ENCODE measurements at regions of chr6 and their contacts with region 1.

Region 1: DNA sequence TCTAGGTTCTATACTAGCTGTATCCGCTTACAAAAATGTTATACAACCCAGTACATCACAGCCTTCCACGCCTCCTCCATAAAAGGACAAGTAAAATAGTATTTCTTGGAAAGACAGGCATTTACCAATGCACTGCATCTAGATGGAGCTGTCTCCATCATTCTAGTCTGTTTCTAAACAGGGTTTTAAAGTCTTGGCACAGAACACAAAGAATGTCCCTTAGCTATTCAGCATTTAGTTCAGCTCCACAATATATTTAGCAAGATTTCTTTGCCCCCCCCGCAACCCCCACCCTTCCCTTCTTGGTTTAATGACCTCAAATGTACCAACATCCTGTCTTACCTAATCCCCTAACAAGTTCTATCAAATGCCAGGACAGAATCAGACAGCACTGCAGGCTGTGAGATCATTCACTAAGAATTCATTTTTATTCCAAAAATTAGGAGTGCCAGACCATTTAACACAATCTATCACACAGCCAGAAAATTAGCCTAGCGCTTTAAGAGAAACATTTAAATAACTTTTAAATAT is 198.6 kb downstream of the BACH2 start:
- DNase-seq: no peak

Region 2: GRCh38 chr6:89970609-89971337 is 127.3 kb before region 1 on chr6:
- intact Hi-C with region 1: loop called (anchors 5 kb)
- DNase-seq: no peak

Region 3: DNA sequence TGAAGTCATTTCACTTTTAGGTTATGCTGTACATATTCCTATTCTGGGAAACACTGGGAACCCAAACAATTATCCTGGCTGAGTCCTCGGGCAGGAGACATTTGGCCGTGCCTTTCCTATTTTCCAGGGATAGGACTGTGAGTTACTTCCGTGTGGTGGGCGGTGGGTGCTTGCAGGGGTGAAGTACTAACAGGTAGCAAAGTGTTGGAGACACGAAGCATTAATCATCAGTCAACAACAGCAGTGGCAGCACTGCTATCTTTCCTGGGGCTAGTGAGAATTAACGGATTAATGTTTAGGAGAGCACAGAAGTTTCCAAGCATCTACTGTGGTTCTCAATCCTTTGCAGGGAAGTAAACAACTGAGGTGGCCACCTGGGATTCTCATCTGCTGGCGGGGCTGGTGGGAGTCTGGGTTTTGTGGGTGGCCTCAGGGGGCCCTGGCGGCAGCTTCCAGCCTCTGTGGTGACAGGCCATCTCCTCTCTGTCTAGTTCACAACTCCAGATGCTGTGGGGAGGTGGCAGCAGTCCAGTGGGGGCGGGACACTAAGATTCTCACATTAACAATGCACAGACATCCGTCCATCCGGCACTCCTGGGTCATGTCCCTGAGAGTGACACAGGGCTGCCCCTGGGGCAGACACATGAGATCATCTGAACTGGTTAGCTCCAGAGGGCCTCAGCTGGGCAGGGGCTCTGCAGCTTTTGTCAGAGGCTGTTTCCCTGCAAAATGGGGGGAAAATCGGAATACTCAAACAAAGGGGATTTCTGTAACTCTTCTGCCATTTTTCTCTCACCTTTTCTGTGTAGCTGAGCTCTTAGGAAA is 112.9 kb before region 1 on chr6:
- intact Hi-C with region 1: loop called (anchors 5 kb)
- DNase-seq: peak; percentile 92

Region 4: DNA sequence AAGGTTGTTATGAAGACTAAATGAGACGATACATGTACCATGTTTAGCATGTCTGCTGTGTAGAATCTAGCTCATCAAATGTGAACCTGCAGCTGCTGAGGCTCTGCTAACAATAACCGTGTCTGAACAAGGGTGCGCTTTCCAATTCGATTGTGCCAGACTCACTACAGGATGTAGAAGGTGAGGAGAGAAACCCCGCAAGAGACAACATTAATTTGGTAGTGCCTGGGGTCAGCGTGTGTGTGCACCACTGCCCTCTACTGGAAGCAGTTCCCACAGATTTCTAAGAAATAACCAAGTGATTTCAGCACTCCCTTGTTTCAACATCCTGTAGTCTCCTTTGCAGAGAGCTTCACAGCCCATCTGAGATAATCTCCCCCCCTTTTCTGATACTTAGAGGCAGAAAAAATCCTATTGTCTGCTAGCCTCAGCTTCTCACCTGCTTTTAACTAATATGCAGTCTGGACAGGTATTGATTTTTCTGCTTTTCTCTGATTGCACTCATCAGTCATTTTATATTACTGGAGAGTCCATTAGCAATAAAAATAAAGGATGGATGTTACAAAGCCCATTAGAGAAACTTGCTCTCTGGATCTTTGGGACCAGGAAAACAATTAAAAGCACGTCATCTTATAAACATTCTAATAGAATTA is 295.3 kb after region 1 on chr6:
- intact Hi-C with region 1: loop called (anchors 5 kb)
- DNase-seq: no peak